PC-3 (cell line): ENCODE measurements at regions of chr1 and their contacts with region 1.

Region 1: GRCh38 chr1:227318003-227318852 is at the start of gene CDC42BPA:
- DNase-seq: peak; percentile 96
- ATAC-seq: peak; percentile 78
- H3K4me3 ChIP-seq: peak within 1 kb of the TSS; percentile 72
- H3K27ac ChIP-seq: peak within 1 kb of the TSS; percentile 60
- H3K4me1 ChIP-seq: peaks cover 15% of the 10 kb centered on the region
- H3K27me3 ChIP-seq: no peaks in the 10 kb centered on the region
- CTCF ChIP-seq: no peak
- total RNA-seq, gene CDC42BPA: 32.0 and 42.1 TPM in 2 replicates

Region 2: DNA sequence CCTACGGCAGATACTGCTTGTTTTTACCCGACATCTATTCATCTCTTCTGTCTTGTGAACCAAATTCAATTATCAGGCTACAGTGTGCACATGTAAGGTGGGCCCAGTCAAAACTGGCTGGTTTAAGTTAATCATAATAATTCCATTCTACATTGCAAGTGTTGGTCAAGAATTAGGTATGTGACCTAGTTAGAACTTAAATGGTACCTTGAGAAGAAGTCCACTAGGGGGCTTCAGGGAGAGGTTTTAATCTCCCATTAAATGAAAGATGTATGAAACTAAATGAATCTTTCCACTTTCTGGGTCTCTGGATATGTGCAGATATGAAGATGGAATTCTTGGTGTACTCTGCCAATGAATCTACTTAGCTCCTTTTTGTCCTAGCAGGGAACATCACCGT is 187.0 kb before region 1 on chr1:
- CTCF ChIA-PET with region 1: no interaction called
- POLR2A ChIA-PET with region 1: no interaction called
- intact Hi-C with region 1: loop called (anchors 1 kb)
- DNase-seq: peak; percentile 83
- ATAC-seq: peak; percentile 84
- H3K4me3 ChIP-seq: no peak overlapping the region
- H3K27ac ChIP-seq: no peak overlapping the region
- H3K4me1 ChIP-seq: no peaks in the 10 kb centered on the region
- H3K27me3 ChIP-seq: no peaks in the 10 kb centered on the region
- CTCF ChIP-seq: peak; percentile 97

Region 3: GRCh38 chr1:227299241-227299627 is 19.0 kb before region 1 on chr1:
- CTCF ChIA-PET with region 1: no interaction called
- POLR2A ChIA-PET with region 1: interaction called, 5 read pairs
- intact Hi-C with region 1: loop called (anchors 1 kb)
- DNase-seq: peak; percentile 49
- ATAC-seq: peak; percentile 48; the same call in 1 of the 2 replicates
- H3K4me3 ChIP-seq: peak overlapping the region; percentile 10; the same call in 1 of the 2 replicates
- H3K27ac ChIP-seq: peak overlapping the region; percentile 10; the same call in 1 of the 2 replicates
- H3K4me1 ChIP-seq: peaks cover 22% of the 10 kb centered on the region
- H3K27me3 ChIP-seq: no peaks in the 10 kb centered on the region
- CTCF ChIP-seq: no peak

Region 4: GRCh38 chr1:227357171-227357880 is 39.1 kb after region 1 on chr1:
- CTCF ChIA-PET with region 1: interaction called, 7 read pairs
- POLR2A ChIA-PET with region 1: interaction called, 4 read pairs
- intact Hi-C with region 1: loop called (anchors 1 kb)
- DNase-seq: peak; percentile 96
- ATAC-seq: peak; percentile 95
- H3K4me3 ChIP-seq: peak overlapping the region; percentile 39
- H3K27ac ChIP-seq: peak overlapping the region; percentile 85
- H3K4me1 ChIP-seq: peaks cover 28% of the 10 kb centered on the region
- H3K27me3 ChIP-seq: no peaks in the 10 kb centered on the region
- CTCF ChIP-seq: no peak

Region 5: GRCh38 chr1:227388214-227389173 is 70.3 kb after region 1 on chr1:
- CTCF ChIA-PET with region 1: no interaction called
- POLR2A ChIA-PET with region 1: no interaction called
- intact Hi-C with region 1: loop called (anchors 1 kb)
- DNase-seq: peak; percentile 80
- ATAC-seq: peak; percentile 84
- H3K4me3 ChIP-seq: no peak overlapping the region; the same call in 1 of the 2 replicates
- H3K27ac ChIP-seq: peak overlapping the region; percentile 15
- H3K4me1 ChIP-seq: peaks cover 13% of the 10 kb centered on the region
- H3K27me3 ChIP-seq: no peaks in the 10 kb centered on the region
- CTCF ChIP-seq: no peak